Heart left ventricle (tissue), 16 donors: ENCODE measurements at regions of chr5 and their contacts with region 1.

Region 1: DNA sequence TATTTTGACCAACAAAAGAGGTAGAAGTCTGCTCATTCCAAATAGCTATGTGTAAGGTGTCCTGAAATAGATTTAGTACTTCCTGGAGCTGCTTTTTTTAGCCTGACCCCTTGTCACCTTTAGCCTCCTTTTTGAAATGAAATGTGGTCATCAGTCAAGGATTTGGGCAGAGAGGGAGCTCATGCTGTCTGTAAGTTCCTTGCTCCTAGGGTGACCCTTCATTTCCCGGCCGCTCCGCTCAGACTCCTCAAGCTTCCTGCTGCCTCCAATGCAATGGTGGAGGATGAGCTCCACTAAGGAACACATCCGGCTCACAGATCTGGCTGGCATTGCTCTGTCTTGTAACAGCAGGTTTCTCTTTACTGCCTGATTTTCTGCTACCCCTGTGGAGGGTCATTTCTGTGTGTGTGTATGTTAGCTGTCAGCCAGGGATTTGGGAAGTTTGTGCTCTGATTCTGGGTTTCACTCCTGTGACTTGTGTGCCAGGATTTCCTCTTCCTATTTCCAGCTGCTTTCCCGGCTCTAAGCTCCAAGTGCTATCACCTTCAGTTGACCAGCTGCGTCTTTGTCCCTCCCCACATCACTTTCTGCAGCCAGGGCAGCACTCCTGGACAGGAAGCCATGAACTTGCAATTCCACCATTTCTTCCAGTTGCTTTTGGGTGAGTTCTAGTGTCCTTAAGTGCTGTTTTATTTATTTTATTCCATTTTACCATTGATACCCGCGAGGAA is 265.9 kb downstream of the ICE1 start:
- DNase-seq: peak in 4 of 5 donors; percentile 25 to 50 (median 44)
- ATAC-seq: peak; percentile 78 to 87 (median 80)
- H3K4me3 ChIP-seq: peak overlapping the region in 5 of 12 donors; percentile 16 to 45 (median 28)
- H3K27ac ChIP-seq: peak overlapping the region in 9 of 12 donors; percentile 28 to 84 (median 45)
- H3K4me1 ChIP-seq: peaks cover 0 to 39% (median 7%) of the 10 kb centered on the region in 12 donors
- H3K27me3 ChIP-seq: no peaks in the 10 kb centered on the region
- CTCF ChIP-seq: no peak
- POLR2A ChIP-seq: no peak

Region 2: DNA sequence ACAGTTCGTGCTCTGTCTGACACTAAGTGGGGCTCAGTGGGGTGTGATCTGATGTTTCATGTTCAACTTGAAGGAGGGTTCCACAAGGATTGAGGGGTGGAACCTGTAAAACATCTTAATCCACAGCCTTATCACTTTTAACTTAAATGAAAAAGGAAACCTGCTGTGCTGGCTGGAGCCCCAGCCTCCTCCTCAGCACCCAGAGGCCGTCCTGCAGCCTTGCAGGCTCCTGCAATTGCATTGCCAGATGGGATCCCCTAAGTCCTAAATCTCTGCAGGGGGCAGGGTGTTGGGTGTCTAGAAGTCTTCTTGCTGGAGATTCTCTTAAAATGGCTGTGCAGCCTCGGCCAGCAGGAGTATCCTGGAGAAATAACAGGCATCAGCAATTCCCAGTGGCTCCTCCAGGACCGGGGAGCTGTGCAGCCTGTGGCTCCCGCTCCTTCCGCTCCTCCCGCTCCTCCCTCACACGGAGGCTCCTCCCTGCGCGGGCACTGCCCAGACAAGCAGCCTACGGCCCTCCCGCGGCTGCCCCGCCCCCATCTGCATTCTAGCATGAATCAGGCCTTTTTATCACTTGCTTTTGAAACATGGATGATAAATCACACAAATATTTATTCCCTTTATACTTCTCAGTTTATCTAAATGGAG is 417.3 kb before region 1 on chr5:
- intact Hi-C with region 1: no loop called
- DNase-seq: peak; percentile 36 to 79 (median 53)
- ATAC-seq: peak in 3 of 4 donors; percentile 86 to 96 (median 93)
- H3K4me3 ChIP-seq: peak overlapping the region in 7 of 12 donors; percentile 4 to 37 (median 24)
- H3K27ac ChIP-seq: no peak overlapping the region
- H3K4me1 ChIP-seq: peaks cover 0 to 12% (median 4%) of the 10 kb centered on the region in 12 donors
- H3K27me3 ChIP-seq: peaks cover 0 to 4% (median 0%) of the 10 kb centered on the region in 9 donors
- CTCF ChIP-seq: no peak
- POLR2A ChIP-seq: no peak

Region 3: DNA sequence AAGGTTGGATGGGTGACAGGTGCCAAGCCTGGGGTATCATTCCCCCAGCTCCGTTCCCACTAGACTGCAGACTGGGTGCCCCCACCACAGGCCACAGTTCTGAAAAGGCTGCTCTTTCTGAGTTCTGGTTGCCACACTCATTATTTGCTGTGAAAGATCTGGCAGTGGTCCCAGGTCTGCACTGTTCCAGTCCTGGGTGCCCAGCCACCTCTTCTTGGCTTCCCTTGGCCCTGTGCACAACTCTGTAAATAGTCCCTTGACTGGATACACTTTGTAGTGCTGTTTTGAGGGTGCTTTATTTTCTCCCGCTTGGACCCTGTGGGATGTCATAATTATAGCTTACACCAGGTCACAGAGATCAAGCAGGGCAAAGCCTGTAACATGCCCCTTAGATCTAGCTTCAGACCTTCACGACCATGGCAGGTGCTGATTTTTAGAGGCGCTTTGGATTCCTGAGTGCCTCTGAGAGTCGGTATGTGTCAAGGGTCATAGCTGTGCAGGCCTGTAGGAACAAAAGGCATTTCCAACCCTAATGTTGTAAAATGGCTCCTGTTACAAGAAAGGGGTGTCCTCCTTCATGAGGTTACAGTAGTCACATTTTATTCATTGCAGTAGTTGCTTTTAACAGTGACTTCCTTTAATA is 79.0 kb after region 1 on chr5:
- intact Hi-C with region 1: loop called in 1 of 10 experiments (anchors 5 kb)
- DNase-seq: peak in 4 of 5 donors; percentile 56 to 81 (median 68)
- ATAC-seq: peak; percentile 94 to 97 (median 96)
- H3K4me3 ChIP-seq: no peak overlapping the region
- H3K27ac ChIP-seq: peak overlapping the region in 9 of 12 donors; percentile 25 to 71 (median 39)
- H3K4me1 ChIP-seq: peaks cover 0 to 12% (median 0%) of the 10 kb centered on the region in 12 donors
- H3K27me3 ChIP-seq: no peaks in the 10 kb centered on the region
- CTCF ChIP-seq: no peak
- POLR2A ChIP-seq: no peak

Region 4: GRCh38 chr5:5795074-5795771 is 106.9 kb after region 1 on chr5:
- intact Hi-C with region 1: loop called in 3 of 10 experiments (anchors 10 kb)
- DNase-seq: peak; percentile 55 to 92 (median 67)
- ATAC-seq: peak; percentile 89 to 98 (median 96)
- H3K4me3 ChIP-seq: no peak overlapping the region
- H3K27ac ChIP-seq: peak overlapping the region in 9 of 12 donors; percentile 15 to 74 (median 55)
- H3K4me1 ChIP-seq: peaks cover 0 to 27% (median 5%) of the 10 kb centered on the region in 12 donors
- H3K27me3 ChIP-seq: no peaks in the 10 kb centered on the region
- CTCF ChIP-seq: no peak
- POLR2A ChIP-seq: no peak

Region 5: DNA sequence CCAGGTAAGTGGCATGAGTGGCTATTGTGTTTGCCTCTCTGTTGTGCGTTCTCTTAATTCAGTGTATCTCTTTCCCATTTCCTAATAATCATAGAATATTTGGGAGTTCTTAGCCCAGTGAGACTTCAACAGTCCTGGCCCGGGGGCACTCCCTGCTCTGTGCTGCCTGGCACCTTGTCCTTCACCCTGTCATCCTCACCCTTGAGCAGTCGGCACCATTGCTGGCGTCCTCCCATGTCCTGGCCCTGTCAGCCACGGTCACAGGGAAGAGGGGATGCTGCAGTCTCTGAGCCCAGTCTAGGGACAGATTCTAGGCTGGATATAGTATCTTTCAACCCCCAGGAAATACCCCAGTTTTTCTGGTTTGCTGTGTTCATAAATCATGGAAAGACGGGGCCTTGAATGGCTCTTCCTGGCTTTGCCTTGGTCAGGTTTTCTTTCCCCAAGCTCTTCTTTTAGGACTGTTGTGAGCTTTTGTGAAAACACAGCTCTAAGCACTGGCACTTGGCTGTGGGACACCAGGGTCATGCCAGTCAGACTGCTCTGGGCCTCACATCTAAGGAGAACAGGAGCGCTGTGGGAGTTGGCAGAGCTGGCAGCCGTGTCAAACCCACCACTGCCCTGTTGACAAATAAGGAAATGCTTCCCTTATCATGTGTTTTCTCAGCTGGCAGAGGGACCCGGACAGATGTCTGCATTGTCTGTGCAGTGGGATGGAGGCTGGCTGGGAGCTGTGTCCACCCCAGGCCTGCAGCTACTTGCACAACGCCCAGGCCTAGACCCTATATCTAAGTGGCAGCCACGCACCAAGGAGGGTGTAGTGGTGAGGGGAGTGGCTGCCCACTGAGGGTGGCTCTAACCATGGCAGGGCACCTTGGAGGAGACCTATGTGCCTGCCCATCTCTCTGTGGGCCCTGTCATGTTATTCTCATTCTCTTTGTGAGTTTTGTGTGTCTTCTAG is 112.7 kb after region 1 on chr5:
- intact Hi-C with region 1: loop called in 3 of 10 experiments (anchors 10 kb)
- DNase-seq: peak in 3 of 5 donors; percentile 59 to 67 (median 60)
- ATAC-seq: peak; percentile 54 to 78 (median 64)
- H3K4me3 ChIP-seq: no peak overlapping the region
- H3K27ac ChIP-seq: peak overlapping the region in 7 of 12 donors; percentile 10 to 61 (median 42)
- H3K4me1 ChIP-seq: peaks cover 0 to 17% (median 6%) of the 10 kb centered on the region in 12 donors
- H3K27me3 ChIP-seq: no peaks in the 10 kb centered on the region
- CTCF ChIP-seq: no peak
- POLR2A ChIP-seq: no peak

Region 6: DNA sequence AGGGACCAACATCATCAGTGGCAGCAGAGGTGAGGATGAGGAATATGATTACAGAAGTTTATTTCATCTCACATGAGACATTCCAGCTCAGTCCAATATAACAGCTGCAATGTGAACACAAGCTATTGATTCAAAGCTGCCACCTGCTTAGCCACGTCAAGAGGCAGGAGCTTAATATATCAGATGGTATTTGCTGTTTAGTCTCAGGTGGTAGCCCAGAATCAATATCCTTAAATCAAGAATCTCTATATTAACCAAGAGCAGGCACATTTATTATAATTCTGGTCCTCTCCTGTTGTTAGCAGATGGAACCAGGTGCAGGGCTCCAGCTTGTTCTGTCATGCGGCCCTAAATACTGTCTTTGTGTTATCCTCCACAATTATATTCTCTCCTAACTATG is 165.7 kb after region 1 on chr5:
- intact Hi-C with region 1: no loop called
- DNase-seq: no peak
- ATAC-seq: no peak
- H3K4me3 ChIP-seq: no peak overlapping the region
- H3K27ac ChIP-seq: no peak overlapping the region
- H3K4me1 ChIP-seq: no peaks in the 10 kb centered on the region
- H3K27me3 ChIP-seq: no peaks in the 10 kb centered on the region
- CTCF ChIP-seq: no peak
- POLR2A ChIP-seq: no peak